ENCODE measurements at regions of chr16 and their contacts with region 1.

Region 1: GRCh38 chr16:75464130-75464918 is at the start of gene TMEM170A:
- DNase-seq: peak; percentile 99
- ATAC-seq: peak; percentile 97
- H3K4me3 Mint-ChIP-seq: peak within 1 kb of the TSS; percentile 96
- H3K27ac Mint-ChIP-seq: peak within 1 kb of the TSS; percentile 93
- H3K4me1 Mint-ChIP-seq: peaks cover 42% of the 10 kb centered on the region
- H3K27me3 Mint-ChIP-seq: no peaks in the 10 kb centered on the region
- total RNA-seq, gene TMEM170A: 30.2 to 31.1 TPM

Region 2: GRCh38 chr16:75385507-75386152 is 78.7 kb before region 1 on chr16:
- CTCF ChIA-PET with region 1: interaction called, 12 read pairs
- POLR2A ChIA-PET with region 1: no interaction called
- DNase-seq: peak; percentile 26
- ATAC-seq: peak; percentile 11
- H3K4me3 Mint-ChIP-seq: no peak overlapping the region
- H3K27ac Mint-ChIP-seq: no peak overlapping the region
- H3K4me1 Mint-ChIP-seq: peaks cover 8% of the 10 kb centered on the region
- H3K27me3 Mint-ChIP-seq: peaks cover 14% of the 10 kb centered on the region

Region 3: DNA sequence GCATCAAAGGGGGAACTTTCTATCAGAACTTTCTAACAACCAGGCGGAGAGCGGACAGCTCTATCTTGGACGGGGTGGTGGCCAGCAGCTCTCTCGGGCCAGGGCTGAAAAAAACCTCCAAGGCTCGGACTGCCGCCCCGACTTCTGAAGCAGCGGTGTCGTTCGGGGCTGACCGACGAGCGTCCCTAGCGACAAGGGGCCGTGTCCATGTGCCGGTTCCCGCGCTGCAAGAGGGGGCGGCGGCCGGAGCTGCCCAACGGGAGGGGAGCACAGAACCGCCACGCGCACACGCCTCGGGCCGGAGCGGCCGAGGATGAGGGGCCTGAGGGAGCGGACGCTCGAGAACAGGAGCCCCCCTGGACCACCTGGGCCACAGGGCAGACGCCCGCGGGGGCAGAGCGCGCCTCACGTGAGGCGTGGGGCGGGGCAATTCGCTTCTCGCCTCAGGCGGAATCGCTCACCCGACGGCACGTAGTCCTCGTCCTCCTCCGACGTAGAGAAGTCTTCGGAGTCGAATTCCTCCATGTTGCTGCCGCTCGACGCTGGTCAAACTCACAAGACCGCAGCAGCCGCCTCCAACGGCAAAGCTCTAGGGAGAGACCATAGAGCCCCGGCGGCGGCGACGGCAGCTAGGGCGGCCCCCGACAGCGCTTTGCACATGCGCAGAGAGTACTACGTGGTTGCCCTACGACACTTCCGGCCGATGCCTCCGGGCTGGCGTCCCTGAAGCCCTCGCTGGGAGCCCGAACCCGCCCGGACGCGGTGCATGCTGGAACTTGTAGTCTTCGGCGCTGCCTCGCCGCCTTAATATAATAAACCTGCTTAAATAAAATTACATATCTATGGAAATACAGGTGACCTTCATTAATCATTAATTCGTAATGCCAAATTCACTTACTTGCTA is 31.2 kb before region 1 on chr16 and contains the start of gene CFDP1:
- CTCF ChIA-PET with region 1: interaction called, 20 read pairs
- POLR2A ChIA-PET with region 1: interaction called, 21 read pairs
- DNase-seq: peak; percentile 97
- ATAC-seq: peak; percentile 93
- H3K4me3 Mint-ChIP-seq: peak within 1 kb of the TSS; percentile 78
- H3K27ac Mint-ChIP-seq: peak within 1 kb of the TSS; percentile 90
- H3K4me1 Mint-ChIP-seq: peaks cover 39% of the 10 kb centered on the region
- H3K27me3 Mint-ChIP-seq: no peaks in the 10 kb centered on the region
- total RNA-seq, gene CFDP1: 38.9 to 41.6 TPM

Region 4: GRCh38 chr16:75502916-75503605 is 38.7 kb after region 1 on chr16:
- CTCF ChIA-PET with region 1: no interaction called
- POLR2A ChIA-PET with region 1: no interaction called
- DNase-seq: no peak
- ATAC-seq: no peak
- H3K4me3 Mint-ChIP-seq: no peak overlapping the region
- H3K27ac Mint-ChIP-seq: no peak overlapping the region
- H3K4me1 Mint-ChIP-seq: no peaks in the 10 kb centered on the region
- H3K27me3 Mint-ChIP-seq: peaks cover 19% of the 10 kb centered on the region

Region 5: DNA sequence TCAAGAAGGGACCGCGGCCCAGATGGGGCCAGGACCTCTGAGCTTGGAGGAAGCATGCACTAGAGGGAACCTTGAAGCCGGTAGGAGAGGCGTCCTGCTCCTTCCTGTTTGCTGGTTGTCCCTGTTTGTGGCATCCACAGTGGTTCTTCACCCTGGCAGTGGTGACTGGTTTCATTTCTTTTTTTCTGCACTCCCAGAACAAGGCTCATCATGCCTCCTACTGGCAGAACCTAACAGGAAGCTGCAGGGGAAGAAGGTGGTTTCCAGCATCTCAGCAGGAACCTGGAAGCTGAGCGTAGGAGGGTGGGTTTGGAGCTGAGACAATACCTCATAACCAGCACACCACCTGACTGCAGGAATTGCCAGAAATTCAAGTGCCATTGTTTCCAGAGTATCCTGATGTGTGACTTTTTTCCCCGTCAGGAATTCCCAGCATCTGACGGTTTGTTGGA is 85.9 kb after region 1 on chr16:
- CTCF ChIA-PET with region 1: interaction called, 10 read pairs
- POLR2A ChIA-PET with region 1: no interaction called
- DNase-seq: peak; percentile 48
- ATAC-seq: peak; percentile 76
- H3K4me3 Mint-ChIP-seq: no peak overlapping the region
- H3K27ac Mint-ChIP-seq: no peak overlapping the region
- H3K4me1 Mint-ChIP-seq: peaks cover 11% of the 10 kb centered on the region
- H3K27me3 Mint-ChIP-seq: peaks cover 9% of the 10 kb centered on the region

Region 6: GRCh38 chr16:75566040-75566810 is 101.9 kb after region 1 on chr16 and contains the start of gene GABARAPL2:
- CTCF ChIA-PET with region 1: interaction called, 17 read pairs
- POLR2A ChIA-PET with region 1: no interaction called
- DNase-seq: peak; percentile 92
- ATAC-seq: peak; percentile 79
- H3K4me3 Mint-ChIP-seq: peak within 1 kb of the TSS; percentile 97
- H3K27ac Mint-ChIP-seq: peak within 1 kb of the TSS; percentile 90
- H3K4me1 Mint-ChIP-seq: peaks cover 39% of the 10 kb centered on the region
- H3K27me3 Mint-ChIP-seq: peaks cover 14% of the 10 kb centered on the region
- total RNA-seq, gene GABARAPL2: 57.3 to 59.6 TPM

Region 7: DNA sequence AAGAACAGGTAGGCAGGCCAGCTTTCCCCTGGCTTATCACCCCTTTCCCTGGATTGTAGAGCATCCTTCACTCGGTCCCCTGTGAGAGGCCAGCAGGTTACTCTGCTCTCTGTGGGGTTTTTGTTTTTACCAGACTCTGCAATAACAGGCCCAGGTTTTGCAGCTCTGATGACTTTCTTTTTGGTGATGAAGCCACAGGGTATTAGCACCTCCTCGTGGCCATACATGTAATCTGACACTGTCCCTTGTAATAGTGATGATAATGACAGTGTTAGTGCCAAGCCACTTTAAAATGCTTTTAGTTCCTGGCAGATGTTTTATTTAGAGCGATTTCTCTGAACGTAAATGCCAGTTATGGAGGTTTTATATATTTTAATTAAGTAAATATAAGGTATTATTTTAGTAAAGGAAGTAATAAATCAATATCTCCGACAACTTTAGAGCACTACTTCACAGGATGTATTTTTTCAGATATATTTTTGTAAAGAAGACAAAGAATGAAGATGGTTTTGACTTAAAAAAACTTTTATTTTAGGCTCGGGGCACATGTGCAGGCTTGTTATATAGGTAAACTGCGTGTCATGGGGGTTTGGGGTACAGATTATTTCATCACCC is 299.9 kb after region 1 on chr16:
- CTCF ChIA-PET with region 1: interaction called, 24 read pairs
- POLR2A ChIA-PET with region 1: no interaction called
- DNase-seq: peak; percentile 74
- ATAC-seq: peak; percentile 96
- H3K4me3 Mint-ChIP-seq: no peak overlapping the region
- H3K27ac Mint-ChIP-seq: no peak overlapping the region
- H3K4me1 Mint-ChIP-seq: no peaks in the 10 kb centered on the region
- H3K27me3 Mint-ChIP-seq: peaks cover 14% of the 10 kb centered on the region